PC-3 (cell line): ENCODE measurements at regions of chr22 and their contacts with region 1.

Region 1: DNA sequence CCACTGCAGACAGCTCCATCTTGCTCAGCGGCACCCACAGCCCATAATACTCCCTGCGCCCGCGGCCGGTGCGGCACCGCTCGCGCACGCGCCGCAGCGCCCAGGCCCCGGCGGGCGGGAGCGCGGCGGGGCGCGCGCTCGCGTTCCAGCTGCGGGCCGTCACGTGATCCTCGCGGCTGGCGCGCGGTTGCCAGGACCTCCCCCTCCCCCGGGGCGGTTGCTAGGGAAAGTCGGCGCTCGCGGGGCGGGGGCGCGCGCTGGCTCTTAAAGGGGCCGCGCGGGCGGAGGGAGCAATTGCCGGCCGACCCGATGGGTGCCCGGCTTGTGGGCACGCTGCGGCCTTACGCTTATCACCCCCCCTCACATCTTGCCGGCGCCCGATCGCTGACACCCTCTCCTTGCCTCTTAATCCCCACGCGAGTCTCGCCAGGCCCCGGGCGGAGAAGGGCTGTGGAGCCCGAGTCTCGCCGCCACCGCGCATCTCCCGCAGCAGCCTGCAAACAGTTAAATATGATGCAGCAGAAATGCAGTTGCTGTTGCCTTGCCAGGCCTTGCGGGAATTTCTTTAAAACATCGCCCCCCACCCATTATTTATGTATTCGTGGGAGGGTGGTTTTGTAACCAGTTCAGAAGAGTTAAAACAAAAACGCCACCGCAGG is at the start of gene CBX6:
- DNase-seq: peak; percentile 86
- ATAC-seq: peak; percentile 71
- H3K4me3 ChIP-seq: peak within 1 kb of the TSS; percentile 83
- H3K27ac ChIP-seq: peak within 1 kb of the TSS; percentile 34
- H3K4me1 ChIP-seq: peaks cover 24% of the 10 kb centered on the region
- H3K27me3 ChIP-seq: no peaks in the 10 kb centered on the region
- CTCF ChIP-seq: no peak
- total RNA-seq, gene CBX6: 37.5 and 50.1 TPM in 2 replicates

Region 2: DNA sequence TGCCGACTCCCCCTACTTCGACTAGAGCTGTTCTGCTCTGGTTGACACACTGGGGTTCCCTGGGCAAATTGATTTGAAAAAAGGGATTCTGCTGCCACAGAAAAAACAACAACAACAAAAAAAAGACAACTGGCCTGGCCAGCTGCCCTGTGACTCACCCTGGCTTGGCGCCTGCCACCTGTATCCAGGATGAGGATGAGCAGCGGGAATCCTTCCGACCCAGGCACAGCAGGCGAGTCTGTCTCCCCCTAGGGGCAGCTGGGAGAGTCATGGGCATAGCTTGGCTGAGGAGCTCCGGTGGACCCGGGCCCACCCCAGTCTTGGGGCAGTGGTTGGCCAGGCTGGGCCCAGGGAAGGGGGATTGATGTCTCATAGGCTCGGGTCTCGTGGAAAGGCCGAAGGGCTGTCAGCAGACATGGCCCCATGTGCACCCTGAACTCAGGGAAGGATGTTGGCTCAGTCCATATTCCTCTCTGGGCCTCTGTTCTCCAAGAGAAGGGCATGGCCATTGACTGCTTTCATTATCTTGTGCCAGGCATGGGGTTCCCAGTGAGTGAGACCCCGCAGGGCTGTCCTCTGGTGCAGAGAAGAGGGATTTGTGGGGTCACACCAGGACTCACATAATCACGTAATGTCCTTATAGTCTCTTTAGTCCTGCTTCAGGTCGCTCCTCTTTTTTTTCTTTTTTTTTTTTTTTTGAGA is 106.1 kb before region 1 on chr22:
- CTCF ChIA-PET with region 1: interaction called, 3 read pairs
- POLR2A ChIA-PET with region 1: no interaction called
- intact Hi-C with region 1: loop called (anchors 2 kb)
- DNase-seq: peak; percentile 82
- ATAC-seq: peak; percentile 81
- H3K4me3 ChIP-seq: no peak overlapping the region
- H3K27ac ChIP-seq: no peak overlapping the region
- H3K4me1 ChIP-seq: peaks cover 11% of the 10 kb centered on the region
- H3K27me3 ChIP-seq: no peaks in the 10 kb centered on the region
- CTCF ChIP-seq: peak; percentile 88

Region 3: GRCh38 chr22:38831166-38831945 is 40.9 kb before region 1 on chr22:
- CTCF ChIA-PET with region 1: no interaction called
- POLR2A ChIA-PET with region 1: no interaction called
- intact Hi-C with region 1: no loop called
- DNase-seq: no peak
- ATAC-seq: no peak
- H3K4me3 ChIP-seq: no peak overlapping the region
- H3K27ac ChIP-seq: no peak overlapping the region
- H3K4me1 ChIP-seq: peaks cover 11% of the 10 kb centered on the region
- H3K27me3 ChIP-seq: no peaks in the 10 kb centered on the region
- CTCF ChIP-seq: no peak

Region 4: DNA sequence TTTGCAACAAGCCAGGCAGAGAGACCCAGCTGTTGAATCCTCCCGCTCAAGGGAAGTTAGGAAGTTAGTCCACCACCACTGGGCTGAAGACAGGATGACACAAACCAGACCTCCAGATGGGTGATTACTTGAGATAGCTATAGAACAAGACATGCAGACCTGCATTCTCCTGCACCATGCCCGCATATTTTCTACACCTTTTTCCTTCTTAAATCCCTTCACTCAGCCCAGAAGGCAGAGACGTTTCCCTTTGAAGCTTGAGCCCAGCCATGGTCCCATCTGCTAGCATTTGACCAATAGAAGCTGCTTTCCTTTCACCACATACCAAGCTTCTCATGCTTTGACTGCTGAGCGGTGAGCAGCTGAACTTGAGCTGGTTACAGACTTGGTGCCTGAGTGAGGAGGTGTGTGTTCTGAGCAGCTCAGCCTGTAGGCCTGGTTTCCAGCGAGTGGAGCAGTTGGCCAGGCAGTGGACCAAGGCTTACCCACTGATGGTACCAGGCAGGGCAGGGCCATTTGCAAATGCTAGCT is 28.9 kb after region 1 on chr22:
- CTCF ChIA-PET with region 1: no interaction called
- POLR2A ChIA-PET with region 1: no interaction called
- intact Hi-C with region 1: no loop called
- DNase-seq: no peak
- ATAC-seq: no peak
- H3K4me3 ChIP-seq: no peak overlapping the region
- H3K27ac ChIP-seq: no peak overlapping the region
- H3K4me1 ChIP-seq: no peaks in the 10 kb centered on the region
- H3K27me3 ChIP-seq: no peaks in the 10 kb centered on the region
- CTCF ChIP-seq: no peak

Region 5: DNA sequence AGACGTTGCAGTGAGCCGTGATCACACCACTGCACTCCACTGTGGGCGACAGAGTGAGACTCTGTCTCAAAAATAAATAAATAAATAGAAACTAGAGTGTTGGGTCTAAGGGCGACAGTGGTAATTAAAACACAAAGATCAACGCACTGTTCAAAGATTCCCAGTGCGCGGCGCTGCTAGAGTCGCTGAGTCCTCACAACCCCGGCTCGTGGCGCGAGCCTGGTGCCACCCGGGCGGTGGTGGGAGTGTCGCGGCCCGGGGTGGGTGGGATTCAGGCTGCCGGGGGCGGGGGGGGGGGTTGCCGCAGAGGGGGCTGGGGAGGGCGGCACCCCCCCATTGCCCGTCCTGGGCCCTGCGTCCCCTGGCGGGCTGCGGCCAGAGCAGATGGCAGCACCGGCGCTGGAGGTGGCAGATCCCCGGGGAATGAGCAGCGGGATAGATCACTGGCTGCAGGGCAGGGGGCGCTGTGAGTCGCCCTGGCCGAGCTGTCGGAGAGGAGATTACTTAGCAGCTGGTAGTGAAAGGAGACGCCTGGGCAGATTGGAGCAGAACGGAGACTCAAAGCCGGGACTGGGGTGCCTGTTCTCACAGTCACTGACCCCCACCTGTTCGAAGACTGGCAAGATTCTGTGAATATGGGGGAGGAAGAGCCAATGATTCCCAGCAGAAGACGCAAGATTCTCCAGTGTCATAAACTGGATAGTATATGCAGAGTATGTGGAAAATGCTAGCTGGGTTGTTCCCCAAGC is 54.9 kb after region 1 on chr22:
- CTCF ChIA-PET with region 1: interaction called, 9 read pairs
- POLR2A ChIA-PET with region 1: no interaction called
- intact Hi-C with region 1: loop called (anchors 2 kb)
- DNase-seq: no peak
- ATAC-seq: no peak
- H3K4me3 ChIP-seq: no peak overlapping the region
- H3K27ac ChIP-seq: no peak overlapping the region
- H3K4me1 ChIP-seq: peaks cover 30% of the 10 kb centered on the region
- H3K27me3 ChIP-seq: no peaks in the 10 kb centered on the region
- CTCF ChIP-seq: 0 out of 2 replicates have a peak, but pooled peaks have one; percentile 10

Region 6: GRCh38 chr22:38981992-38982927 is 110.0 kb after region 1 on chr22 and contains the start of gene APOBEC3B:
- CTCF ChIA-PET with region 1: no interaction called
- POLR2A ChIA-PET with region 1: no interaction called
- intact Hi-C with region 1: loop called (anchors 5 kb)
- DNase-seq: peak; percentile 91
- ATAC-seq: peak; percentile 91
- H3K4me3 ChIP-seq: peak within 1 kb of the TSS; percentile 58
- H3K27ac ChIP-seq: peak within 1 kb of the TSS; percentile 79
- H3K4me1 ChIP-seq: peaks cover 26% of the 10 kb centered on the region
- H3K27me3 ChIP-seq: no peaks in the 10 kb centered on the region
- CTCF ChIP-seq: no peak
- total RNA-seq, gene APOBEC3B: 11.3 TPM in 2 replicates

Region 7: DNA sequence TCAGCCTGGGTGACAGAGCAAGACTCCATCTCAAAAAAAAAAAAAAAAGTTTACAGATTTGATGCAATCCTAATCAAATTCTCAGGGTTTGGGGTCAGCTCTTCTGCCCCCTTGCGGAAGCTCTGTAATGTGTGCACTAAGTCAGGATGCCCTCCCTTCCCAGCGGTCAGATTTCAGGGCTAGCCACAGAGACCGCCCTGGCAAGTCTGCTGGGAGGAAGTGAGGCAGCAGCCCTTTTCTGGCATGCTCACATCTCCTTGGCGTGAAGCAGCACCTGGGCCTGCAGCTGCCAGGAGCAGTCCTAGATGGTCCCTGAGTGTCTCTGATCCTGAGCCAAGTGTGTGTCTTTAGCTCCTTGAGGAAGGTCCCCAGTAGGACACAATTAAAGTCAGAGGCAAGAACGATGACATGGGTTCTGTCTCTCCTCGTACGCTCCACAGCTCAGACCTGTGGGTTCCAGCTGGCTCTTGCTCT is 130.9 kb after region 1 on chr22:
- CTCF ChIA-PET with region 1: interaction called, 8 read pairs
- POLR2A ChIA-PET with region 1: no interaction called
- intact Hi-C with region 1: loop called (anchors 1 kb)
- DNase-seq: peak; percentile 90
- ATAC-seq: peak; percentile 99
- H3K4me3 ChIP-seq: no peak overlapping the region
- H3K27ac ChIP-seq: peak overlapping the region; percentile 36
- H3K4me1 ChIP-seq: peaks cover 5% of the 10 kb centered on the region
- H3K27me3 ChIP-seq: no peaks in the 10 kb centered on the region
- CTCF ChIP-seq: peak; percentile 70